ENCODE measurements at regions of chr7 and their contacts with region 1.

Region 1: GRCh38 chr7:117759950-117760640 is 113.1 kb downstream of the CTTNBP2 start:
- DNase-seq: no peak
- H3K4me3 ChIP-seq: no peak overlapping the region
- H3K27ac ChIP-seq: no peak overlapping the region
- H3K4me1 ChIP-seq: no peaks in the 10 kb centered on the region
- H3K27me3 ChIP-seq: no peaks in the 10 kb centered on the region
- CTCF ChIP-seq: no peak
- POLR2A ChIP-seq: no peak

Region 2: DNA sequence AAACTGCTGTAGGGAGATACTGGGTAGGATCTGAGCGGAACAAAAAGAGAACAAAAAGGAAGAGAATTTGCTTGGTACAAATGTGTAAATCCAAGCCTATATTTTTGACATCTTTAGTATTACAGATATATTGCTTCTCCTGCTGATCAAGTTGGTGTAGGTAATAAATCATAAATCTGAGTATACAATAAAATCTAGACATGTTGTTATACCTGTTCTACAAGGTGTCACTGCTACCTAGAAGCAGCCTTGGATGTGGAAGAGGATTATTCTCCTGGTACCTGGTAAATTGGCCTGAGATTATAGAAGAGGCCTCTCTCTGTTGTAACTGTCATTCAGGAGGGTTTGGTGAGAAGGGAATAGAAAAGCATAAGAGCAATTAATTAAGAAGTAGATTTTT is 333.9 kb after region 1 on chr7:
- intact Hi-C with region 1: loop called (anchors 5 kb)
- DNase-seq: no peak
- H3K4me3 ChIP-seq: no peak overlapping the region
- H3K27ac ChIP-seq: no peak overlapping the region
- H3K4me1 ChIP-seq: no peaks in the 10 kb centered on the region
- H3K27me3 ChIP-seq: no peaks in the 10 kb centered on the region
- CTCF ChIP-seq: no peak
- POLR2A ChIP-seq: no peak

Measured in vagina (tissue), 2 donors.